PC-3 (cell line): ENCODE measurements at regions of chr5 and their contacts with region 1.

Region 1: DNA sequence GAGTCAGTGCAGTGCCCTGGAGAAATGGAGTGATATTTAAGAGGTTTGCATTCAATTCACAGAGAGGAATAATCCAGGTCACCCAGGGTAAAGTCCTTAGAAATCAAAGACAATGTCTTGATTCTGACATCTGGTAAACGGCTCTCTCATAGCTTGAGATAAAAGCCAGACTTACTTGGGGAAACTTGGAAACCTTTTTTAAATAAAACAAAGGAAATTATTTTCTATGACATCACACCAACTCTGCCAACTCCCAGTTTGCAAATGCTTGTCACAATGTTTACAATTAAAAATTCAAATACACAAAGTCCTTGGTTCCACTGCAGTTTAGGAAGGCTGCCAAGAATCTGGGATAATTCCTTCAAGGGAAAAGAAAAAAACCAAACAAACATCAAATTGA is 255.1 kb upstream of the NREP start:
- DNase-seq: peak; percentile 58
- ATAC-seq: peak; percentile 75
- H3K4me3 ChIP-seq: no peak overlapping the region
- H3K27ac ChIP-seq: peak overlapping the region; percentile 24; the same call in 1 of the 2 replicates
- H3K4me1 ChIP-seq: peaks cover 18% of the 10 kb centered on the region
- H3K27me3 ChIP-seq: no peaks in the 10 kb centered on the region
- CTCF ChIP-seq: no peak

Region 2: GRCh38 chr5:111550279-111551020 is 461.7 kb before region 1 on chr5:
- CTCF ChIA-PET with region 1: no interaction called
- POLR2A ChIA-PET with region 1: no interaction called
- intact Hi-C with region 1: loop called (anchors 5 kb)
- DNase-seq: peak; percentile 97
- ATAC-seq: peak; percentile 89
- H3K4me3 ChIP-seq: no peak overlapping the region
- H3K27ac ChIP-seq: peak overlapping the region; percentile 54
- H3K4me1 ChIP-seq: peaks cover 21% of the 10 kb centered on the region
- H3K27me3 ChIP-seq: no peaks in the 10 kb centered on the region
- CTCF ChIP-seq: peak; percentile 80

Region 3: GRCh38 chr5:111859533-111860270 is 152.4 kb before region 1 on chr5:
- CTCF ChIA-PET with region 1: no interaction called
- POLR2A ChIA-PET with region 1: no interaction called
- intact Hi-C with region 1: loop called (anchors 5 kb)
- DNase-seq: peak; percentile 9
- ATAC-seq: no peak
- H3K4me3 ChIP-seq: no peak overlapping the region
- H3K27ac ChIP-seq: no peak overlapping the region
- H3K4me1 ChIP-seq: no peaks in the 10 kb centered on the region
- H3K27me3 ChIP-seq: no peaks in the 10 kb centered on the region
- CTCF ChIP-seq: no peak

Region 4: GRCh38 chr5:112077180-112077579 is 65.1 kb after region 1 on chr5:
- CTCF ChIA-PET with region 1: no interaction called
- POLR2A ChIA-PET with region 1: no interaction called
- intact Hi-C with region 1: no loop called
- DNase-seq: no peak
- ATAC-seq: no peak
- H3K4me3 ChIP-seq: no peak overlapping the region
- H3K27ac ChIP-seq: no peak overlapping the region
- H3K4me1 ChIP-seq: no peaks in the 10 kb centered on the region
- H3K27me3 ChIP-seq: no peaks in the 10 kb centered on the region
- CTCF ChIP-seq: no peak